AG04449 (cell line): ENCODE measurements at regions of chr5 and their contacts with region 1.

Region 1: GRCh38 chr5:132386644-132387286 is 17.3 kb downstream of the SLC22A5 start:
- DNase-seq: no peak
- H3K4me3 ChIP-seq: no peak overlapping the region
- CTCF ChIP-seq: peak; percentile 94

Region 2: GRCh38 chr5:132410451-132411381 is 24.0 kb after region 1 on chr5:
- CTCF ChIA-PET with region 1: interaction called, 16 read pairs
- POLR2A ChIA-PET with region 1: no interaction called
- DNase-seq: no peak
- H3K4me3 ChIP-seq: peak overlapping the region; percentile 69
- CTCF ChIP-seq: peak; percentile 65

Region 3: GRCh38 chr5:132473019-132473531 is 86.3 kb after region 1 on chr5:
- CTCF ChIA-PET with region 1: interaction called, 15 read pairs
- POLR2A ChIA-PET with region 1: no interaction called
- DNase-seq: no peak
- H3K4me3 ChIP-seq: no peak overlapping the region
- CTCF ChIP-seq: no peak

Region 4: GRCh38 chr5:132526290-132526973 is 139.7 kb after region 1 on chr5:
- CTCF ChIA-PET with region 1: interaction called, 41 read pairs
- POLR2A ChIA-PET with region 1: no interaction called
- DNase-seq: no peak
- H3K4me3 ChIP-seq: peak overlapping the region; percentile 6; the same call in 1 of the 2 replicates
- CTCF ChIP-seq: peak; percentile 53

Region 5: GRCh38 chr5:132736853-132737833 is 350.4 kb after region 1 on chr5 and contains the start of gene KIF3A:
- CTCF ChIA-PET with region 1: interaction called, 12 read pairs
- POLR2A ChIA-PET with region 1: no interaction called
- DNase-seq: peak; percentile 38
- H3K4me3 ChIP-seq: peak within 1 kb of the TSS; percentile 91
- CTCF ChIP-seq: no peak